ENCODE measurements at regions of chr6 and their contacts with region 1.

Region 1: GRCh38 chr6:42028234-42029061 is 21.9 kb upstream of the TAF8 start:
- DNase-seq: peak; percentile 62
- H3K4me3 ChIP-seq: no peak overlapping the region
- H3K27ac ChIP-seq: peak overlapping the region; percentile 34
- H3K4me1 ChIP-seq: peaks cover 10% of the 10 kb centered on the region
- H3K27me3 ChIP-seq: no peaks in the 10 kb centered on the region
- CTCF ChIP-seq: no peak
- POLR2A ChIP-seq: no peak

Region 2: GRCh38 chr6:41941280-41942066 is 87.0 kb before region 1 on chr6 and contains the start of gene CCND3:
- CTCF ChIA-PET with region 1: interaction called, 4 read pairs
- POLR2A ChIA-PET with region 1: no interaction called
- dilution Hi-C with region 1: no loop called
- intact Hi-C with region 1: loop called (anchors 5 kb)
- DNase-seq: peak; percentile 78
- H3K4me3 ChIP-seq: peak within 1 kb of the TSS; percentile 58 to 88 (median 76)
- H3K27ac ChIP-seq: peak within 1 kb of the TSS; percentile 57
- H3K4me1 ChIP-seq: peaks cover 34% of the 10 kb centered on the region
- H3K27me3 ChIP-seq: no peaks in the 10 kb centered on the region
- CTCF ChIP-seq: no peak
- POLR2A ChIP-seq: peak; percentile 69
- total RNA-seq, gene CCND3: 87.5 and 96.7 TPM in 2 replicates

Region 3: DNA sequence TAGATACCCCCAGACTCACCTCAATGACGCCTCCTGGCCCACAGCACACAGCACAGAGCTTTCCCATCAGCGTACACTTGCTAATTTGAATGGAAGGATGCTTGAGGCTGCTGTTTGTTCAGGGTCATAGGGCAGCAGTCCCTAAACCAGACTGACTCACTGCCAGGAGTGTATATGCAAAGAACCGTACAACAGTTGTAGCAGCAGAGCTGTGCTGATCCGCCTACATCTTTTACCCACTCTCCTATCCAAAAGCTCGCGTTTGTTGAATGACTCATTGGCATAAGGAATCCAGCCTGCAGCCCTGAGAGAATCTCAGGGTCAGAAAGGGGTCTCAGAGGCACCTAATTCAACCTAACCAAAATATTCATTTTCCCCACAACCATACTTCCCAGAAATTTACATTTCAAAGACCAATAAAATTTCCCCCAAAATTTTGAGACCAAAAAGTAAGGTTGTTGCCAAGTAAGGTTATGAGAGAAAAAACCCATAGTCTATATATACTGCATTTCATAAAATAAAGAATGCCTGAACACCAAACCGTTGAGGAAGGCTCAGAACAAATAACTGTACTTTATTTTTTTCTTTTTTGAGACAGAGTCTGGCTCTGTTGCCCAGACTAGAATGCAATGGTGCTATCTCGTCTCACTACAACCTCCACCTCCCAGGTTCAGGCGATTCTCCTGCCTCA is 51.5 kb before region 1 on chr6:
- CTCF ChIA-PET with region 1: no interaction called
- POLR2A ChIA-PET with region 1: no interaction called
- dilution Hi-C with region 1: no loop called
- intact Hi-C with region 1: no loop called
- DNase-seq: no peak
- H3K4me3 ChIP-seq: no peak overlapping the region
- H3K27ac ChIP-seq: no peak overlapping the region
- H3K4me1 ChIP-seq: no peaks in the 10 kb centered on the region
- H3K27me3 ChIP-seq: no peaks in the 10 kb centered on the region
- CTCF ChIP-seq: no peak
- POLR2A ChIP-seq: no peak

Measured in endothelial cell of umbilical vein (primary cell).